Right cardiac atrium (tissue), 5 donors: ENCODE measurements at regions of chr9 and their contacts with region 1.

Region 1: DNA sequence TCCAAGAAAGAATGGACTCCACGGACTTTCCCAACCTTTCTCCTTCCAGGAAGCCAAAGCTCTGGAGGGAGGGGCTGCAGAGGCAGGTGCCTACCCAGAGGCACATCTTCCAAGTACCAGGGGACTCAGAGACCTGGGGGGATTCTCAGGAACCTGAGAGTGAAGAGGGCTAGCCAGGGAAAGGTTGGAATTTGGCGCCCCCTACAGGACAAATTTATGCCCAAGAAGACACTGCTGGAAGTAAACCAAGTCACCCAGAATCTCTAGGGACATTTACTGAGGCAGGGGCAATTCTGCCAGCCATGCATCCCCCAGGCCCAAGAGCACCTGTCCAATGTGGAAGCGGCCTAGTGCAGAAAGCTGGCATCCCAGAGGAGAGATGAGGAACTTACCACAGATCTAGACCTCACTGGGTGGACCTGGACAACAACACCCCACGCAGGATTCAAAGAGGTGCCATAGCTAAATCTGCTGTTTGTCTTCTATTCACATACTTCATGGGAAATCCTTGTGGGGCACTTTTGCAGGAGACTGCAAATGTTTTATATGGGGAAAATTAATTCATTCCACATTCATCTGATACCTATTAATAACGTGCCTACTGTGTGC is 25.9 kb upstream of the IDNK start:
- DNase-seq: no peak
- ATAC-seq: peak; percentile 36 to 39
- H3K4me3 ChIP-seq: no peak overlapping the region
- H3K27ac ChIP-seq: no peak overlapping the region
- H3K4me1 ChIP-seq: no peaks in the 10 kb centered on the region
- H3K27me3 ChIP-seq: no peaks in the 10 kb centered on the region

Region 2: GRCh38 chr9:83199243-83199642 is 397.8 kb before region 1 on chr9:
- intact Hi-C with region 1: loop called in 2 of 4 experiments (anchors 10 kb)
- DNase-seq: peak in 1 of 3 donors; percentile 53
- ATAC-seq: peak; percentile 90 to 92
- H3K4me3 ChIP-seq: no peak overlapping the region
- H3K27ac ChIP-seq: no peak overlapping the region
- H3K4me1 ChIP-seq: no peaks in the 10 kb centered on the region
- H3K27me3 ChIP-seq: no peaks in the 10 kb centered on the region

Region 3: GRCh38 chr9:83334320-83334719 is 262.7 kb before region 1 on chr9:
- intact Hi-C with region 1: loop called in 1 of 4 experiments (anchors 5 kb)
- DNase-seq: peak; percentile 78 to 90 (median 90)
- ATAC-seq: peak; percentile 92 to 95
- H3K4me3 ChIP-seq: no peak overlapping the region
- H3K27ac ChIP-seq: no peak overlapping the region
- H3K4me1 ChIP-seq: no peaks in the 10 kb centered on the region
- H3K27me3 ChIP-seq: no peaks in the 10 kb centered on the region

Region 4: DNA sequence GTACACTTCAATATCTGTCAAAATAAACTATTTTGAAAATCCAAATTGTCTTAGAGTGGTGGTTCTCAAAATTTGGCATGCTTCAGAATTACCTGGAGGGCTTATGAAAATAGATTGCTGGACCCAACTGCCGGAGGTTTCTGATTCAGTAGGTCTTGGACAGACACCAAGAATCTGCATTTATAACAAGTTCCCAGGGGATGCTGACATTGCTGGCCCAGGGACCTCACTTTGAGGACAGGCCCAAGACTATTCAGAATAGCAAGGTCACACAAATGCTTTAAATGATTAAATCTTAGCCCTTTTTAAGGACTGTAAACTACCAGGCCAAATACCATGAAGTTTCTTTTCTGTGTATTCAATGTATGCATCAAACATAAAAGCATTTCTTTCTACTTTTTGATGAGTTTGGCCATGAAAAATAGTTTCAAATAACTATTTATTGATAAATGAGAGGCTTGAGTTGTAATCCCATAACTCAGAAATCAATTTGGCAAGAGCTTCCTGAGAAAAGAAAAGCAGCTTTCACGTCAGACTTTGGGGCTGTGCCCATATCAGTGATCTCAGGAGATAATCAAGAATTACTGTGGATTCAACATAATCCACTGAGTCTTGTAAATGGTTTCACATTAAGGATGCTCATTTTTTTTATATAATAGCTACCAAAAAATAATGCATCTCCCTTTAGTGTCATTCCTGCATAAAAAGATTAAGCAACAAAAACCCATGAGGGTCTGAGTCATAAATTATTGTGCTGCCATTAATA is 250.2 kb before region 1 on chr9:
- intact Hi-C with region 1: loop called in 1 of 4 experiments (anchors 10 kb)
- DNase-seq: no peak
- ATAC-seq: no peak
- H3K4me3 ChIP-seq: no peak overlapping the region
- H3K27ac ChIP-seq: no peak overlapping the region
- H3K4me1 ChIP-seq: no peaks in the 10 kb centered on the region
- H3K27me3 ChIP-seq: no peaks in the 10 kb centered on the region

Region 5: DNA sequence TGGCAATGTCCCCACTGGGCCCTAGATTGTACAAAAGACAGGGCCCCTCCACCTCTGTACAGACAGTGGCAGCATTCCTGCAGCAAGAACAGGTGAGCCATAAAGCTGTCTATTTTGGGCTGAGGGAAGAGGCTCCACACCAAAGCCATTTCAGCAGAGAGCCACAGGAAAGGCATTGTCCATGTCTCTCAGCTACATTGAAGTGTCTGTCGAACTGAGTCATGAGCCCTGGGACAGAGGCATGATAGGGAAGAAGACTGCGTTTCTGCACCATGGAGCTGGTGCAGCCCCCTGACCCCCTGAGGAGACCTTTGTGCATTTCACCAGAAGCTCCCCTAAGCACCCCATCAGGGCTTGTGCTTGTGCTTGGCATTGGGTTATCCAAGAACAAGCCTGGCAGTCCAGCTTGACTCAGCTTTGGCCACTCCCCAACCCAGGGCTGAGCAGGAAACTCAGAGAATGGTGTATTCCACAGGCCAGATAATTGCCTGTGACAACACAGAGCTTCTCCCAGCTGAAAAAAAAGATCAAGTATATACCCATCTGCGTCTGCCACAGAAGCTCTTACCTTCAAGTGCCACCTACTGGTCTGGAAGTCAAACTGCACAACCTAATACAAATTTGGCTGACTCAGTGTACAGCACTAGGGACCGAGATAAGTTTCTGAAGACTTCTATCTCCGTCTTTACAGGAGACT is 52.9 kb before region 1 on chr9:
- intact Hi-C with region 1: loop called in 1 of 4 experiments (anchors 10 kb)
- DNase-seq: peak in 2 of 3 donors; percentile 42 to 58
- ATAC-seq: peak; percentile 87 to 96
- H3K4me3 ChIP-seq: no peak overlapping the region
- H3K27ac ChIP-seq: no peak overlapping the region
- H3K4me1 ChIP-seq: peaks cover 2% of the 10 kb centered on the region
- H3K27me3 ChIP-seq: no peaks in the 10 kb centered on the region